ENCODE measurements at regions of chr22 and their contacts with region 1.

Region 1: DNA sequence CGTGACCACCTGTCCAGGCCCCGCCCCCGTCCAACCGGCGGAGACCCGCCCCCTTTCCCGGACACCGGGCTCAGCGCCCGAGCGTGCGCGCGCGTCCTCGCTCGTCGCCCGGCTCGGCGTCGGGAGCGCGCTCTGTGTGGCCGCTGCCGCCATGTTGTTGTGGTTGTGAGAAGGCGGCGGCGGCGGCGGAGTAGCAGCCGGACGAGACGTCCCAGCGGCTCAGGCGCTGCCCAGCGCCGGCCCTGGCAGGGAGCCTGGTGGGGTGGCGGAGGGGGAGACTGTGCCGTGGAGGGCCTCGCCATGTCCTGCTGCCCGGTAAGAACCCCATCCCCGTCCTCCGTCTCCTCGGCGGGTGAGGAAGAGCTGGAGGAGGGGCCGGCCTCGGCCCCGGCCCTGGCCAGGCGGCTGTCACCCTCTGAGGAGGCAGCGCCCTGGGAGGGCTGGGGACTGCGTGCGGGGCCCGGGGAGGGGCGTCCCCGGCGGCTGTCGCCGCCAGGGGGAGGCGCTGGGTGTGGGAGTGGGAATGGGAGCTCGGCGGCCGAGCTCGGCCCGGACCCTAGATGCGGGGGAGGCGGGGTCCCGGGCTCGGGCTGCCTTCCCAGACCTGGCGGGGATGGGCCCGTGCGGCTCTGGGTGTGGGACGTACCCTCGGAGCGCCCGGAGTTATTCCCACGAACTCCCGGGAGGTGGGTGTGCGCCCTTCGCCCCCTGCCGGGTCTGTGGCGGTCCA is at the start of gene MTMR3:
- DNase-seq: peak; percentile 88
- ATAC-seq: peak; percentile 87
- H3K4me3 ChIP-seq: peak within 1 kb of the TSS; percentile 86
- H3K27ac ChIP-seq: peak within 1 kb of the TSS; percentile 68
- H3K4me1 ChIP-seq: peaks cover 10% of the 10 kb centered on the region; the same call in 1 of the 2 replicates
- H3K27me3 ChIP-seq: no peaks in the 10 kb centered on the region
- CTCF ChIP-seq: peak; percentile 35; the same call in 1 of the 2 replicates
- total RNA-seq, gene MTMR3: 12.1 and 17.3 TPM in 2 replicates

Region 2: DNA sequence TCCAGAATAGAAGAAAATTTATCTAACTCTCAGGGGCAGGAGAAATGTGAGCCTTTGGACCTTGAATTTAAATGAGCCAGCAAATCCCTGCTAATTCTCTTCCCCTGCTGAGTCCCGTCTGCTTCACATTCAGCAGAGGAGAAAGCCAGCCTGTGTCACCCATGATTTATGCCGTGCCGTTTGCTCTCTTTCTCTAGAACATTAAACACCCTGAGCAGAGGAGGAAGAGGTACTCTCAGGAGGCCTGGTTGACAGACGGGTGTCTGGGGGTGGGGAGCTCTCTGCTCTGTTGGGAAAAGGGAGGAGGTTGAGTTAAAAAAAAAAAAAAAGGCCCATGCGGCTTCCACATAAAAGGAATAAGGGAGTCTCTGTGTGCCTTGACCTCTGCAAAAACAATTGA is 11.5 kb before region 1 on chr22:
- CTCF ChIA-PET with region 1: no interaction called
- POLR2A ChIA-PET with region 1: no interaction called
- intact Hi-C with region 1: no loop called
- DNase-seq: no peak
- ATAC-seq: no peak
- H3K4me3 ChIP-seq: no peak overlapping the region
- H3K27ac ChIP-seq: no peak overlapping the region
- H3K4me1 ChIP-seq: no peaks in the 10 kb centered on the region
- H3K27me3 ChIP-seq: no peaks in the 10 kb centered on the region
- CTCF ChIP-seq: no peak

Region 3: DNA sequence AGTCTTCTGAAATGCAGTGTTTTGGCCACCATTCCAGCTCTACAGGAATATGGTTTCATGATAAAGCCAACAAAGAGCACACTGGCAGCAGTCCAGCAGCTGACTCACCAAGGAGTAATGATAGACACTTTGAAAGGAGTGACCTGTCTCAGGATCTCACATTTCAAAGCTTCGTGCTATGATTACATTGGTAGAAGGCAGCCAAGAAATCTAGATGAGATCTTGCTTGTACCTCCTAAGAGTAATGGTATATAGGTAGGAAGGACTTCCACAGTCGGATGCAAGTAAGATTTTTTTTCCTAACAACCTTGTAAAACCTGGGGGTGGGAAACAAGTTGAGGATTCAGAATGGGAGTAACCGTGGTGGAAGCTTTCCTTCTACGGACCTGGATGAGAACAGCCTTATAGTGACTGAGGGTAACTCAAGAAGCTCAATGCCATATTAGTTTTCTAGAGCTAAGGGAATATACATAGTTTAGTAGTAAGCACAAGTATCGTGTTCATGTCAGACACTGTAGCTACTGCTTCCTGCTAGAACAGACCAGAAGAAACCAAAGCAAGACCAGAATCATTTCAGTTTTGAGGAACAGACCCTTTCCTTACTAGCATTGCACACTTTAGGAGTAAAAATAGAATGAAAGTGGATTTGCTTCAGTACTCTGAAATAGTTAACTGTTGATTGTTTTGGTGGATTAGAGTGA is 24.8 kb after region 1 on chr22:
- CTCF ChIA-PET with region 1: interaction called, 10 read pairs
- POLR2A ChIA-PET with region 1: no interaction called
- intact Hi-C with region 1: no loop called
- DNase-seq: peak; percentile 98
- ATAC-seq: peak; percentile 95
- H3K4me3 ChIP-seq: peak overlapping the region; percentile 38
- H3K27ac ChIP-seq: peak overlapping the region; percentile 59
- H3K4me1 ChIP-seq: peaks cover 41% of the 10 kb centered on the region
- H3K27me3 ChIP-seq: no peaks in the 10 kb centered on the region
- CTCF ChIP-seq: no peak

Region 4: DNA sequence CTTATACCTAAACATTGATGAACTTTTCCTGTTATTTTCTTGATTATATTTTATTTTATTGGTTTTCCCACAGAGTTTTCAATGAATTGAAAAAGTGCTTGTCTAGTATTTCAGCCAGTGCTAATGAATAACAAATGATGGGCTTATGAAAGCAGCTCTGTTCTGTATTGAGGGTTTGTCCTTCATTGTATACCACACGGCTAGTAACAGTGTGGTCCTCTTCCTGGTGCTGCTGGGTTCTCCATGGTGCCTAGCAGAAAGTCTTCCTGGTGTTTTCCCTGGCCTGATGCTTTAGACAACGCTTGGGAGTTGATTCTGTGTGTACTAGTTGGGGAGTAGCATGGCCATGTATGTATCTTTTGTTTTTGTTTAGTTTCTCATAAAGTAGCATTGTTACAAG is 88.9 kb after region 1 on chr22:
- CTCF ChIA-PET with region 1: no interaction called
- POLR2A ChIA-PET with region 1: interaction called, 11 read pairs
- intact Hi-C with region 1: no loop called
- DNase-seq: no peak
- ATAC-seq: no peak
- H3K4me3 ChIP-seq: no peak overlapping the region
- H3K27ac ChIP-seq: no peak overlapping the region
- H3K4me1 ChIP-seq: no peaks in the 10 kb centered on the region
- H3K27me3 ChIP-seq: no peaks in the 10 kb centered on the region
- CTCF ChIP-seq: no peak

Region 5: DNA sequence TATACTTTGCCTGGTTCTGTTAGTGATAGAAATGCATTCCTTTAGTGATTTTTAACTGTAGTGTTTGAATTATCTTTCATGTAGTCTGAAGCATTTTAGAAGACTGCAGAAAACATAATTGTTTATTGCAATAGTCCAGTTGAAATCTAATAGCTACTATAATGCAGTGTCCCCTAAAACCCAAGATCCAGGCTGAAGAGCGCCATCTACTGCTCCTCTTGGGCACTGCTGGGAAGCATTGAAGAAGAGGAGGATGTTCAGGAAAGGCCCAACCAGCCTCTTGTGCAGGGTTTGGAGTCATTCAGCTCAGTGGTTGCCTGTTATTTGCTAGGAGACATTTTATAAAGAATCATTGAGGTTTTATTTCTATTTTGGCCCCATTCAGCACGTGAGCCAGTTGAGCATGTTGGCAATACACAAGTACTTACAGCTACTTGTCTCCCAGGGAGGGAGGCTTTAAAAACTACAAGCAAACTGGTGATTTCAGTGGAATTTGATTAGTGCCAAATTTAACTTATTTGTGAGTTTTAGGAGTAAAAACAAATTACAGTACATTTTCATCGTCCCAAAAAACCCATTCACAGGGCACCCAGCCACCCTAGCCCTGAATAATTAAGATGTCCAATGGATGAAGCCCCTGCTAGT is 122.1 kb after region 1 on chr22:
- CTCF ChIA-PET with region 1: interaction called, 9 read pairs
- POLR2A ChIA-PET with region 1: no interaction called
- intact Hi-C with region 1: loop called (anchors 10 kb)
- DNase-seq: peak; percentile 84
- ATAC-seq: peak; percentile 85
- H3K4me3 ChIP-seq: no peak overlapping the region
- H3K27ac ChIP-seq: no peak overlapping the region
- H3K4me1 ChIP-seq: no peaks in the 10 kb centered on the region
- H3K27me3 ChIP-seq: no peaks in the 10 kb centered on the region
- CTCF ChIP-seq: peak; percentile 93

Region 6: GRCh38 chr22:30015846-30016245 is 132.6 kb after region 1 on chr22:
- CTCF ChIA-PET with region 1: no interaction called
- POLR2A ChIA-PET with region 1: interaction called, 10 read pairs
- intact Hi-C with region 1: no loop called
- DNase-seq: peak; percentile 35
- ATAC-seq: peak; percentile 50
- H3K4me3 ChIP-seq: no peak overlapping the region
- H3K27ac ChIP-seq: no peak overlapping the region
- H3K4me1 ChIP-seq: peaks cover 17% of the 10 kb centered on the region
- H3K27me3 ChIP-seq: no peaks in the 10 kb centered on the region
- CTCF ChIP-seq: no peak

Region 7: DNA sequence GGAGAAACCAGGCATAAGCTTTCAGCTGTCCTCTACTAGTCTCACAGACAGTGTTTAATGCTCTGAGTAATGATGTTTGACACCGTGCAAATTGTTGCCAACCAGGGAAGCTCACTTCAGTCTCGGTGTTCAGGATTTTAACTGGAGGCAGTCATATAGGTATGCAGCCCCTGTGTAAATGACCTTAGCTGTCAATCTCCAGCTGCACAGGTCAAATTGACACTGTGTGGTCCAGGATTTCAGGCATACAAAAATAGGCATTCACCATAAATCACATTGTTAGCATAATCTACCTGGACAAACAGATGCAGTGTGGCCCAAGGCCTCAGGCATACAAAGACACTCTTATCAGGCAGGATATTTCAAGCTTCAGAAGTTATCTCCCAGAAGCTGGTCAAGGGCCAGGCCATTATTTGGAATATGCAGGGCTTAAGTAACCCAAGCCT is 171.4 kb after region 1 on chr22:
- CTCF ChIA-PET with region 1: no interaction called
- POLR2A ChIA-PET with region 1: no interaction called
- intact Hi-C with region 1: no loop called
- DNase-seq: no peak
- ATAC-seq: no peak
- H3K4me3 ChIP-seq: no peak overlapping the region
- H3K27ac ChIP-seq: no peak overlapping the region
- H3K4me1 ChIP-seq: no peaks in the 10 kb centered on the region
- H3K27me3 ChIP-seq: no peaks in the 10 kb centered on the region
- CTCF ChIP-seq: no peak

Region 8: DNA sequence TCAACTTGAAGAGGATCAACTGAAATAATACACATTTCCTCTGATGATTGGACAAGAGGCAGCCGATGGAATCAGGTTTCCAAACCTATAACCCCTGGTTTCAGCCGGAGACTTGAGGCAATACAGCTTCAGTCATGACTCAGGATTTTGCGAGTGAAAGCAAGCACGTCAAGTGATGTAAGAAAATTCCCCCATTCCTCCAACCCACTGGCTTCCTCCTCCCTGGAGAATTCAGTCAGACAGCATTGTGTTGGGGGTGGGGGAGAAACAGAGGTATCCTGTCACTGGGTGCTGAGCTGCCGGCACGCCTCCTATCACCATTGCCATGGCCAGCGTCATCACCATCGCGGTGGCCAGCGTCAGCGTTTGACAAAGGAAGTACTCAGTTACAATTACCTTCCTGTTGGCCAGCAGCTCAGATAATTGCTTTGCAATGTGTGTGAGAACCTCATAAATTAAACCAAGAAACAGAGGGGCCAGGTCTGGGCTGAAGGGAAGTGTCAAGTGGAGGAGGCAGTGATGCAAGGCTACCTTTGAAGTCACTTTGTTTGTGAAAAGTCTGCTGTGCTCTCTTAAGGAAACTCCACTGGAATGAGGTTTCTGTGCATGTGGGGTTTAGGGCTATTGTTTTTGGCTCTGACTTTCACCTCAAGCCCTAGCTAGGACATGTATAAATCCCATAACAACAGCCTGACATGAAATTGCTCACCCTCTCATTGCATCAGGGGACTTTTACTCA is 313.1 kb after region 1 on chr22:
- CTCF ChIA-PET with region 1: no interaction called
- POLR2A ChIA-PET with region 1: no interaction called
- intact Hi-C with region 1: no loop called
- DNase-seq: peak; percentile 93
- ATAC-seq: peak; percentile 69
- H3K4me3 ChIP-seq: no peak overlapping the region
- H3K27ac ChIP-seq: peak overlapping the region; percentile 99
- H3K4me1 ChIP-seq: peaks cover 56% of the 10 kb centered on the region
- H3K27me3 ChIP-seq: no peaks in the 10 kb centered on the region
- CTCF ChIP-seq: no peak

Region 9: DNA sequence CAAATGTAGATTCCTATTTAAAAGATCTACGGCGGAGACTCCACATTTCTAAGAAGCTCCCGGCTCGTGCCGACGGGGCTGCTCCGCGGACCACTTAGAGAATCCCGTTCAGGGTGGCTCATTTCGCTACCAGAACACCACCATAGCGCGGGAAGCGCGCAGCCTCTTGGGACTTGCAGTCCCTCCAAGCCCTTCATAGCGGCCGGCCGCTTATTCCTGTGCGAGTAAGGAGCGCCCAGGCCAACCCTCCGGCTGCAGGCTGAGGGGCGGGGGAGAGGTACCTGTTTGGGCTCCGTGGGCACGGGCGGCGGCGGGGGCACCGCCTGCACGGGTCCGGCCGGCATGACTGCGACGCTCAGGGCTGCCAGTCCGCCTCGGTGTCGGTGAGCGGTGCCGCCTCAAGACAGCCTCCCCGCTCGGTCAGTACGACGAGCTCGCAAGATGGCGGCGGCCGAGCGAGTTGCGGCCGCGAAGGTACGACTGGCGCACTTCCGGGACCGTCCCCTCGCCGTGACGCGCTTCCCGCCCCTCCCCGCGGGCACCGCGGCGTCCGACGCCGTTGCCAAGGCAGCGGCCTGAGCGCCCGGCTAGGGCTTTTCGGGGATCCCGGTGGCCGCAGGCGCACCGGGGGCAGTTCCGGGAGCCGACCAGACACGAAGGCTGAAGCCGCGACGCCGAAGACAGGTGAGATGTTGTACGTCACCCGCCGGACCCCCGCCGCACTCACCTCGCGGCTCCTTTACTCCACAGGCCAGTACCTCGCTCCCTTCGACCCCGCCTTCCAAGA is 473.4 kb after region 1 on chr22 and contains the starts of genes CCDC157 and SF3A1:
- CTCF ChIA-PET with region 1: no interaction called
- POLR2A ChIA-PET with region 1: no interaction called
- intact Hi-C with region 1: no loop called
- DNase-seq: peak; percentile 81
- ATAC-seq: peak; percentile 86
- H3K4me3 ChIP-seq: peak within 1 kb of the TSS; percentile 97
- H3K27ac ChIP-seq: peak within 1 kb of the TSS; percentile 69
- H3K4me1 ChIP-seq: peaks cover 8% of the 10 kb centered on the region
- H3K27me3 ChIP-seq: no peaks in the 10 kb centered on the region
- CTCF ChIP-seq: no peak
- total RNA-seq, gene CCDC157: 1.5 and 3.5 TPM in 2 replicates
- total RNA-seq, gene SF3A1: 59.2 and 69.3 TPM in 2 replicates

Measured in PC-3 (cell line).